ENCODE measurements at regions of chr1 and their contacts with region 1.

Region 1: DNA sequence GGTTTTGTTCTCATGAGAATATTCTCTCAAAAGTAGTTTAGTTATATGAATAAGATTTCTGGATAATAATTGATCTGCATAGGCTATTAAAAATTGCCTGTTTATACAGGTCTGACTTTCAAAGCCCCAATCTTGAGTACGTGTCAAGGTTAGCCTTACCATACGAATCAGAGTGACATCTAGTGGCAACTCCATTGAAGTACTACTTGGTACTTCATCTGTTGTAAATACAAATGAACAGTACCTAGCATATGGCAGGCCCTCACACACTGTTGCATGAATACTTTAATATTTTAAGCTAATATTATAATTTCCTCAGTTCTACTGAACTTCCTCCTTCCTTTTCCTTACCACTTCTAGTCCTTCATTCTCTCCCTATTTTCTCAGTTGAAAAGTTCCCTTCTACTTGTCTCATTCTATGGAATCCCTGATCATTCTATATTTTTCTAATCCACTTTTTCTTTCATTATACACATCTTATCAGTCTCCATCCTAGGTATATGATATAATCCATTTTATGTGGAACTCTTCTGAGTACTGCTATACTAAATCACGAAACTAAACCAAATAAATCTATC is 101.2 kb downstream of the AKT3 start:
- DNase-seq: no peak
- H3K4me3 Mint-ChIP-seq: no peak overlapping the region
- H3K27ac Mint-ChIP-seq: no peak overlapping the region
- H3K4me1 Mint-ChIP-seq: no peaks in the 10 kb centered on the region
- H3K27me3 Mint-ChIP-seq: no peaks in the 10 kb centered on the region

Region 2: DNA sequence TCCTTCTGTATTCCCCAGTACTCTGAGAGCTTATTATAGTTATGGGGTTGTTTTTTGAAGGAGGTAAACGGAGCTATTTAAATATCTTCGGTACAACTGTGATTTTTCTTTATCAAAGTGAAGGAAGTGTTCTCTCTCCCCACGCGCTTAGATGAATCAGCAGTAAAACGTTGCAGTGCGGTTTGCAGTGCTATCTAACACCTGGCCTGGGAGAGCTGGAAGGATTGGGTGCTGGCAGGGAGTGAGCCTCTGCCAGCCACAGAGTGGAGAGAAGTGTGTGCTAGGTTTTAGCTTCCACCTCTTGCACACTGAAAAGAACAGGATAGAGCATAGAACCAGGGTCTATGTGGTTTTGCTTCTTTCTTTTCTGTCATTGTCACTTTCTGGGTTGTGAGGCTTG is 327.0 kb before region 1 on chr1:
- intact Hi-C with region 1: loop called (anchors 5 kb)
- DNase-seq: peak; percentile 52
- H3K4me3 Mint-ChIP-seq: peak overlapping the region; percentile 61
- H3K27ac Mint-ChIP-seq: peak overlapping the region; percentile 57
- H3K4me1 Mint-ChIP-seq: peaks cover 44% of the 10 kb centered on the region
- H3K27me3 Mint-ChIP-seq: no peaks in the 10 kb centered on the region

Region 3: GRCh38 chr1:243475966-243476365 is 272.8 kb before region 1 on chr1:
- intact Hi-C with region 1: loop called (anchors 2 kb)
- DNase-seq: no peak
- H3K4me3 Mint-ChIP-seq: no peak overlapping the region
- H3K27ac Mint-ChIP-seq: no peak overlapping the region
- H3K4me1 Mint-ChIP-seq: peaks cover 12% of the 10 kb centered on the region
- H3K27me3 Mint-ChIP-seq: no peaks in the 10 kb centered on the region

Region 4: DNA sequence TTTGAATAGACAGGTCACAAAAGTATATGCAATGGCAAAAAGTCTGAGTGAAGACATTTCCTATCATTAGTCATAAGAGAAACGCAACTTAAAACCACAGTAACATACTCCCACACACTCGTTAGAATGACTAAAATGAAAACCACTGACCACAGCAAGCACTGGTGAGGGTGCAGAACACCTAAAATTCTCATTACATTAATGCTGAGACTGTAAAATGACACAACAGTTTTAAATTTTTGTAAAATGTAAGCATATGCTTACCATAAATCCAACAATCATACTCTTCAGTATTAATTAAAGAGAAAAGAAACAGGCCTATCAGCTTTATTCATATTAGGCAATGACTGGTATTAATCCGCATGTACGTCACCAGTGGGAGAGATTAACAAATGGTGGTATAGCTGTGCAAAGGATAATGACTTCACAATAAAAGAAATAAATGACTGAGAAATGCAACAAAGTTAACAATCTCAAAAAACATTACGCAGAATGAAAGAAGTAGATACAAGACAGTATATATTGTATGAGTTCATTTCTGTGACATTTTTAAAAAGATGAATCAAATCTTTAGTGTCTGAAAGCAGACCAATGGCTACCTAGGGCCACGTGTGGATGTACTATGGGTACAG is 152.2 kb before region 1 on chr1:
- intact Hi-C with region 1: no loop called
- DNase-seq: peak; percentile 32
- H3K4me3 Mint-ChIP-seq: peak overlapping the region; percentile 75
- H3K27ac Mint-ChIP-seq: peak overlapping the region; percentile 94
- H3K4me1 Mint-ChIP-seq: peaks cover 32% of the 10 kb centered on the region
- H3K27me3 Mint-ChIP-seq: no peaks in the 10 kb centered on the region

Region 5: DNA sequence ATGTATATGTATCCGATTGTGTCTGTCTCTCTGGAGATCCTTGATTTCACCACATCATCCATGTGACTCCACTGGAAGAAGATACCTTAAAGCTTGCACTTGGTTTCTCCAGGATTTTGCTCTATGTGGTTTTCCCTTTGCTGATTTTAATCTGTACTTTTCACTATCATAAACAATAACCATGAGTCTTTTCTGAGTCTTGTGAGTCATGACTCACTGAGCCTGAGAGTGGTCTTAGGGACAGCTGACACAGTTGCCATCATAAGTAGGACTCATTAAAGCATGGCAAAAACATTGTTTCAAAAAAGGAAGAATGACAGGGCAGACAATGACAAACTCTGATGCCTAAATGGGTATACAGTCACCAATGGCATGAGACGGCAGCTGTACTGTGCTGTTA is 125.0 kb before region 1 on chr1:
- intact Hi-C with region 1: no loop called
- DNase-seq: no peak
- H3K4me3 Mint-ChIP-seq: no peak overlapping the region
- H3K27ac Mint-ChIP-seq: no peak overlapping the region
- H3K4me1 Mint-ChIP-seq: no peaks in the 10 kb centered on the region
- H3K27me3 Mint-ChIP-seq: no peaks in the 10 kb centered on the region

Region 6: GRCh38 chr1:243763806-243764205 is 15.0 kb after region 1 on chr1:
- intact Hi-C with region 1: no loop called
- DNase-seq: no peak
- H3K4me3 Mint-ChIP-seq: no peak overlapping the region
- H3K27ac Mint-ChIP-seq: no peak overlapping the region
- H3K4me1 Mint-ChIP-seq: no peaks in the 10 kb centered on the region
- H3K27me3 Mint-ChIP-seq: peaks cover 3% of the 10 kb centered on the region

Region 7: DNA sequence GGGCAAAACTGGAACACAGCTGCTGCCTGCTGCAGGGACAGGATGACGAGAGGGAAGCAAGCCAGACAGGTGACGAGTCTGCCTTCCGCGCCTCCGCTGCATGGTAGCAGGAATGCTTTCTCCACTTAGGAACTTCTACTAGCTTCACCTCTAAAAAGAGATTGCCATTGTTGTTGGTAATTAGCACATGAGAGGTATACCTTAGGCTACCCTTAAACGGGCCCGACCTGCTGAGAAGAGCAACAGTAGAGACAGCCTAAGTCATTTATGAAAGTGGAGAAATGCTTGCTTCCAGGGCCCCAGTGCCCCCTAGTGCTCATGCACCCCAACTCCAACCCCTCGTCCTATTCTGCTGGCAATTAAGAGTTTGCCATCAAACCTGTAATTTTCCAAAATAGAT is 198.2 kb after region 1 on chr1:
- intact Hi-C with region 1: loop called (anchors 5 kb)
- DNase-seq: no peak
- H3K4me3 Mint-ChIP-seq: no peak overlapping the region
- H3K27ac Mint-ChIP-seq: no peak overlapping the region
- H3K4me1 Mint-ChIP-seq: no peaks in the 10 kb centered on the region
- H3K27me3 Mint-ChIP-seq: peaks cover 2% of the 10 kb centered on the region

Measured in activated T-helper 1 cell treated with anti-CD3 and anti-CD28 coated beads, Interleukin-12 subunit alpha, Interleukin-12 subunit beta, Interleukin-2, Interleukin-4 antibody, amounts not matched to agents 30 ng/mL and 10 ng/mL and 1 ng/mL, durations not matched to agents 14 hours and 24 hours and 36 hours (primary cell).